ENCODE measurements at regions of chr2 and their contacts with region 1.

Region 1: GRCh38 chr2:44244129-44244871 is 31.0 kb upstream of the SLC3A1 start:
- DNase-seq: peak; percentile 25 to 86 (median 41)
- ATAC-seq: peak; percentile 95
- H3K4me3 ChIP-seq: peak overlapping the region; percentile 42
- H3K4me3 Mint-ChIP-seq: peak overlapping the region; percentile 94
- H3K27ac ChIP-seq: no peak overlapping the region
- H3K27ac Mint-ChIP-seq: peak overlapping the region; percentile 37
- H3K4me1 ChIP-seq: no peaks in the 10 kb centered on the region
- H3K4me1 Mint-ChIP-seq: peaks cover 36% of the 10 kb centered on the region
- H3K27me3 ChIP-seq: no peaks in the 10 kb centered on the region
- H3K27me3 Mint-ChIP-seq: no peaks in the 10 kb centered on the region
- CTCF ChIP-seq: peak; percentile 71

Region 2: DNA sequence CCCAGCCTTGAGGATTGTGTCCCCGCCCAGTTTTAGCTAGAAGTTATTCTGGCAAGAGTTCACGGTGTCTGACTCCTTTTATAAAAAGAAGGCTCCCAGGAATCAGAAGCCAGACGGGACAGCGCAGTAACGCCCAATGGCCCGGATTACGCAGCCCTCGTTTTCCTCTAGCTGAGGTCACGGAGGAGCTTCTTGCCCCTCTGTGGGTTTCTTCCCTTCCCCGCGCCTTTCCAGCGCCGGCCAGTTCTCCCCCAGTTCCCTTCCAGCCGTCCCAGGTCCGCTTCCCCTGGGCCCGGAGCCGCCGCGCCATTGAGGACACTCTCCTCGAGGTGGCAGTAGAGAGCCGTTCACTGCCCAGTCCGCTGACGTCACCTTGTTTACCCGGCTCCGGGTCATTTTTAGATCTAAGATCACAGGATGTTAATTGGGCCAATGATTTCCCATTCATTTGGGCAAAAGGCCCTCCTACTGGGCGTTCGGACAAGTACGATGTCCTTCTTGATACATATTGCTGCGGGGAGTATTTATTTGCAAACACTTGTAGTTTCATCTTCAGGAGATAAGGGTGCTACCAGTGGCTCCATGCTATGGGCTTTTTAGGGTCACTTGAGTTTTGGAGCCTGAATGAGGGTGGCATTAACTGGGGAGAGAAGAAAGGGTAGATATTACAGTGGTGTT is 157.1 kb before region 1 on chr2:
- CTCF ChIA-PET with region 1: interaction called, 6 read pairs
- POLR2A ChIA-PET with region 1: no interaction called
- intact Hi-C with region 1: loop called in 1 of 2 experiments (anchors 5 kb)
- DNase-seq: peak; percentile 68 to 90 (median 80)
- ATAC-seq: peak; percentile 94
- H3K4me3 ChIP-seq: peak overlapping the region; percentile 48
- H3K4me3 Mint-ChIP-seq: peak overlapping the region; percentile 87
- H3K27ac ChIP-seq: no peak overlapping the region
- H3K27ac Mint-ChIP-seq: peak overlapping the region; percentile 79
- H3K4me1 ChIP-seq: peaks cover 9% of the 10 kb centered on the region
- H3K4me1 Mint-ChIP-seq: peaks cover 11% of the 10 kb centered on the region
- H3K27me3 ChIP-seq: no peaks in the 10 kb centered on the region
- H3K27me3 Mint-ChIP-seq: no peaks in the 10 kb centered on the region
- CTCF ChIP-seq: peak; percentile 95

Region 3: DNA sequence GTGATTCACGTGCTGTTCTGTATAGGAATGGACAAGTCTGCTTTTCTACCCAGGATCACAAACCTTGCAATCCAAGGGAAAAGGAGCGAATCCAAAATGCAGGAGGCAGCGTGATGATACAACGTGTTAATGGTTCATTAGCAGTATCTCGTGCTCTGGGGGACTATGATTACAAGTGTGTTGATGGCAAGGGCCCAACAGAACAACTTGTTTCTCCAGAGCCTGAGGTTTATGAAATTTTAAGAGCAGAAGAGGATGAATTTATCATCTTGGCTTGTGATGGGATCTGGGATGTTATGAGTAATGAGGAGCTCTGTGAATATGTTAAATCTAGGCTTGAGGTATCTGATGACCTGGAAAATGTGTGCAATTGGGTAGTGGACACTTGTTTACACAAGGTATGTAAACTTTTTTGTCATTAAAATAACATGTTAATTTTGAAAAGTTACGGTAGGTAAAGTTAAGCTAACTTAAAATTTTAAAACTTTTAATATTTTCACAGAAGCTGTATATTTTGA is 42.6 kb before region 1 on chr2:
- CTCF ChIA-PET with region 1: no interaction called
- POLR2A ChIA-PET with region 1: no interaction called
- intact Hi-C with region 1: loop called in 1 of 2 experiments (anchors 5 kb)
- DNase-seq: no peak
- ATAC-seq: no peak
- H3K4me3 ChIP-seq: no peak overlapping the region
- H3K4me3 Mint-ChIP-seq: no peak overlapping the region
- H3K27ac ChIP-seq: no peak overlapping the region
- H3K27ac Mint-ChIP-seq: peak overlapping the region; percentile 5
- H3K4me1 ChIP-seq: peaks cover 10% of the 10 kb centered on the region
- H3K4me1 Mint-ChIP-seq: peaks cover 81% of the 10 kb centered on the region
- H3K27me3 ChIP-seq: no peaks in the 10 kb centered on the region
- H3K27me3 Mint-ChIP-seq: no peaks in the 10 kb centered on the region
- CTCF ChIP-seq: no peak

Region 4: DNA sequence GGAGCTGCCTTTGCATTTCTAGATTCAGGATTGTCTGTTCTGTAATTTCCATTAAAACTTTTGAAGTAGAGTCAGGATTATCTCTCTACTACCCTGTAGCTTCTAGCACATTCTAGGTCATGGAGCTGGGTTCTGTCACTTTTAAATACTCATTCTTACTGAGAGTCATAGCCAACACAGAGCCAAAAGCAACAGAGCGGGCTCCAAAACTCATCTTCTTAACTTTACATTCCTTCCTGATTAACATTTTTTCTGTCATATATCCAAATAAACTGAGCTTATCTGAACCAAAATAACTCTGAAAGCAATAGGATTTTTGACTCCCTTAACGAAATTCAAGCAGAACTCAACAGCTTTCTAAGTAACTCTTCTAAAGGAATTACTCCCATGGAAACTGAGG is 104.1 kb after region 1 on chr2:
- CTCF ChIA-PET with region 1: no interaction called
- POLR2A ChIA-PET with region 1: interaction called, 4 read pairs
- intact Hi-C with region 1: loop called (anchors 2 to 5 kb)
- DNase-seq: no peak
- ATAC-seq: no peak
- H3K4me3 ChIP-seq: no peak overlapping the region
- H3K4me3 Mint-ChIP-seq: no peak overlapping the region
- H3K27ac ChIP-seq: no peak overlapping the region
- H3K27ac Mint-ChIP-seq: no peak overlapping the region
- H3K4me1 ChIP-seq: no peaks in the 10 kb centered on the region
- H3K4me1 Mint-ChIP-seq: peaks cover 36% of the 10 kb centered on the region
- H3K27me3 ChIP-seq: no peaks in the 10 kb centered on the region
- H3K27me3 Mint-ChIP-seq: no peaks in the 10 kb centered on the region
- CTCF ChIP-seq: no peak

Region 5: DNA sequence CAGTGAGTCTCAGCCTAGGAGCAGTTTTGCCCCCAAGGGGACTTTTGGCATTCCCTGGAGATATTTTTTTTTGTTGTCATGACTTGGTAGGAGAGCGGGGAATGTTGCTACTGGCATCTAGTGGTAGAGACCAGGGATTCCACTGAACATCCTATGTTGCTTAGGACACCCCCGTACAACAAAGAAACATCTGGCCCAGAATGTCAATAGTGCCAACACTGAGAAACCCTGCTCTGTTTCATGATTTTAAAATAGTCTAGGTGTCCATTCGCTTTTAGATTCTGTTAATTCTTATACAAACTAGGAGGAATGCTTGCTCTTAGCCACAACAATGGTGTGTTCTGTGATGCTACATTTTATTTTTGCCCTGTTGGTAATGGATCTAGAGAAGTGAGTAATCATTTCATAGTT is 471.4 kb after region 1 on chr2:
- CTCF ChIA-PET with region 1: no interaction called
- POLR2A ChIA-PET with region 1: no interaction called
- intact Hi-C with region 1: no loop called
- DNase-seq: no peak
- ATAC-seq: no peak
- H3K4me3 ChIP-seq: no peak overlapping the region
- H3K4me3 Mint-ChIP-seq: no peak overlapping the region
- H3K27ac ChIP-seq: no peak overlapping the region
- H3K27ac Mint-ChIP-seq: no peak overlapping the region
- H3K4me1 ChIP-seq: peaks cover 2% of the 10 kb centered on the region
- H3K4me1 Mint-ChIP-seq: no peaks in the 10 kb centered on the region
- H3K27me3 ChIP-seq: no peaks in the 10 kb centered on the region
- H3K27me3 Mint-ChIP-seq: no peaks in the 10 kb centered on the region
- CTCF ChIP-seq: no peak

Region 6: GRCh38 chr2:44955593-44956392 is 711.5 kb after region 1 on chr2:
- CTCF ChIA-PET with region 1: no interaction called
- POLR2A ChIA-PET with region 1: no interaction called
- intact Hi-C with region 1: loop called (anchors 5 to 10 kb)
- DNase-seq: peak; percentile 48 to 80 (median 66)
- ATAC-seq: peak; percentile 83
- H3K4me3 ChIP-seq: no peak overlapping the region
- H3K4me3 Mint-ChIP-seq: no peak overlapping the region
- H3K27ac ChIP-seq: no peak overlapping the region
- H3K27ac Mint-ChIP-seq: no peak overlapping the region
- H3K4me1 ChIP-seq: peaks cover 23% of the 10 kb centered on the region
- H3K4me1 Mint-ChIP-seq: peaks cover 27% of the 10 kb centered on the region
- H3K27me3 ChIP-seq: peaks cover 41 to 57% of the 10 kb centered on the region in 2 experiments
- H3K27me3 Mint-ChIP-seq: peaks cover 77% of the 10 kb centered on the region
- CTCF ChIP-seq: peak; percentile 78

Measured in CD4-positive, alpha-beta T cell (primary cell).